Naive thymus-derived CD4-positive, alpha-beta T cell (primary cell): ENCODE measurements at regions of chr3 and their contacts with region 1.

Region 1: GRCh38 chr3:184298759-184299496 is at the start of gene PSMD2:
- DNase-seq: peak; percentile 93 to 97 (median 96)
- ATAC-seq: peak; percentile 98
- H3K4me3 ChIP-seq: peak within 1 kb of the TSS; percentile 74
- H3K4me3 Mint-ChIP-seq: peak within 1 kb of the TSS; percentile 89 to 97 (median 94)
- H3K27ac ChIP-seq: peak within 1 kb of the TSS; percentile 80
- H3K27ac Mint-ChIP-seq: peak within 1 kb of the TSS; percentile 85 to 97 (median 92)
- H3K4me1 ChIP-seq: peaks cover 12 to 15% of the 10 kb centered on the region in 2 donors
- H3K4me1 Mint-ChIP-seq: peaks cover 15 to 37% (median 25%) of the 10 kb centered on the region in 7 donors
- H3K27me3 ChIP-seq: no peaks in the 10 kb centered on the region
- H3K27me3 Mint-ChIP-seq: peaks cover 0 to 8% (median 0%) of the 10 kb centered on the region in 5 donors
- total RNA-seq, gene PSMD2: 139 to 204 (median 149) TPM

Region 2: GRCh38 chr3:183697610-183698317 is 601.2 kb before region 1 on chr3 and contains the start of gene YEATS2:
- CTCF ChIA-PET with region 1: no interaction called
- POLR2A ChIA-PET with region 1: no interaction called
- intact Hi-C with region 1: loop called in 1 of 2 experiments (anchors 1 kb)
- DNase-seq: peak; percentile 60 to 81 (median 74)
- ATAC-seq: peak; percentile 95
- H3K4me3 ChIP-seq: peak within 1 kb of the TSS; percentile 89
- H3K4me3 Mint-ChIP-seq: peak within 1 kb of the TSS; percentile 84 to 99 (median 94)
- H3K27ac ChIP-seq: peak within 1 kb of the TSS; percentile 84
- H3K27ac Mint-ChIP-seq: peak within 1 kb of the TSS; percentile 74 to 97 (median 90)
- H3K4me1 ChIP-seq: peaks cover 9 to 18% of the 10 kb centered on the region in 2 donors
- H3K4me1 Mint-ChIP-seq: peaks cover 32 to 50% (median 40%) of the 10 kb centered on the region in 7 donors
- H3K27me3 ChIP-seq: no peaks in the 10 kb centered on the region
- H3K27me3 Mint-ChIP-seq: no peaks in the 10 kb centered on the region
- total RNA-seq, gene YEATS2: 20.6 to 61.4 (median 21.9) TPM

Region 3: GRCh38 chr3:184017672-184018423 is 281.1 kb before region 1 on chr3 and contains the start of gene ABCC5:
- CTCF ChIA-PET with region 1: no interaction called
- POLR2A ChIA-PET with region 1: interaction called, 3 read pairs
- intact Hi-C with region 1: loop called (anchors 1 to 2 kb)
- DNase-seq: peak; percentile 62 to 84 (median 79)
- ATAC-seq: peak; percentile 96
- H3K4me3 ChIP-seq: peak within 1 kb of the TSS; percentile 100
- H3K4me3 Mint-ChIP-seq: peak within 1 kb of the TSS; percentile 96 to 100 (median 99)
- H3K27ac ChIP-seq: peak within 1 kb of the TSS; percentile 72
- H3K27ac Mint-ChIP-seq: peak within 1 kb of the TSS; percentile 70 to 95 (median 91)
- H3K4me1 ChIP-seq: peaks cover 8 to 14% of the 10 kb centered on the region in 2 donors
- H3K4me1 Mint-ChIP-seq: peaks cover 11 to 33% (median 25%) of the 10 kb centered on the region in 7 donors
- H3K27me3 ChIP-seq: no peaks in the 10 kb centered on the region
- H3K27me3 Mint-ChIP-seq: peaks cover 5 to 15% (median 9%) of the 10 kb centered on the region in 5 donors
- total RNA-seq, gene ABCC5: 15.6 to 50.4 (median 25.5) TPM

Region 4: GRCh38 chr3:184185461-184186308 is 113.2 kb before region 1 on chr3 and contains the start of gene ABCF3:
- CTCF ChIA-PET with region 1: no interaction called
- POLR2A ChIA-PET with region 1: interaction called, 4 read pairs
- intact Hi-C with region 1: loop called (anchors 1 kb)
- DNase-seq: peak; percentile 98 to 100 (median 99)
- ATAC-seq: peak; percentile 96
- H3K4me3 ChIP-seq: peak within 1 kb of the TSS; percentile 81
- H3K4me3 Mint-ChIP-seq: peak within 1 kb of the TSS; percentile 91 to 100 (median 98)
- H3K27ac ChIP-seq: peak within 1 kb of the TSS; percentile 89
- H3K27ac Mint-ChIP-seq: peak within 1 kb of the TSS; percentile 89 to 98 (median 97)
- H3K4me1 ChIP-seq: peaks cover 18 to 24% of the 10 kb centered on the region in 2 donors
- H3K4me1 Mint-ChIP-seq: peaks cover 31 to 52% (median 43%) of the 10 kb centered on the region in 7 donors
- H3K27me3 ChIP-seq: no peaks in the 10 kb centered on the region
- H3K27me3 Mint-ChIP-seq: no peaks in the 10 kb centered on the region
- total RNA-seq, gene ABCF3: 79.3 to 153 (median 117) TPM

Region 5: DNA sequence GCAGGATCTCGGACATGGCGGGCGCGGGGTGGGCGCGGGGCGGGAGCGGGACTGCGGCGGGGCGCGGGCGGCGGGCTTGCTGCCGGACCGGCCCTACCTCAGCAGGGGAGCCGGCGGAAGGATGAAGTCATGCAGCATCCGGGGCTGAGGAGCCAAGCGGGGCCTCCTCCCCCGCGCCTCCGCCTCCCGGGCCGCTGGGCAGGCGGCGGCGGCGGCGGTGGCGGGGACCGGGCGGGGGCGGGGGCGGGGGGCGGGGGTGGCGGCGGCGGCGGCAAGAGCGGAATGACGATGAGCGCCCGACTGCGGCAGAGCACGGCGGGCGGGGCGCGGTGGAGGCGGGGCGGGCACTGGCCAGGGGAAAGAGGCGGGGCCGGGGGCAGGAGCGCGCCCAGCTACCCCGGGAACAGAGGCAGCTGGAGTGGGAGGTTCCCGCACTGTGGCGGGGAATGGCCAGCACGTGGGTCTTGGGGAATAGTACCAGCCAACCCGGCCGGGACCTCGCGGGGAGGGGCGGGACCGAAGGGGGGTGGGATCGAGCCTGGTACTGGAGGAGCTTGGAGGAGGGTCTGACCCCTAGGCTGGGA is 37.6 kb before region 1 on chr3 and contains the start of gene CAMK2N2:
- CTCF ChIA-PET with region 1: no interaction called
- POLR2A ChIA-PET with region 1: no interaction called
- intact Hi-C with region 1: loop called (anchors 1 to 2 kb)
- DNase-seq: peak in 2 of 9 donors; percentile 26 to 72
- ATAC-seq: peak; percentile 62
- H3K4me3 ChIP-seq: peak within 1 kb of the TSS; percentile 35
- H3K4me3 Mint-ChIP-seq: peak within 1 kb of the TSS; percentile 80 to 98 (median 88)
- H3K27ac ChIP-seq: no peak within 1 kb of the TSS
- H3K27ac Mint-ChIP-seq: peak within 1 kb of the TSS in 6 of 9 donors; percentile 0 to 63 (median 6)
- H3K4me1 ChIP-seq: peaks cover 15 to 20% of the 10 kb centered on the region in 2 donors
- H3K4me1 Mint-ChIP-seq: peaks cover 18 to 27% (median 21%) of the 10 kb centered on the region in 7 donors
- H3K27me3 ChIP-seq: peaks cover 0 to 18% of the 10 kb centered on the region in 2 donors
- H3K27me3 Mint-ChIP-seq: peaks cover 37 to 57% (median 38%) of the 10 kb centered on the region in 5 donors
- total RNA-seq, gene CAMK2N2: not detected

Region 6: GRCh38 chr3:184275961-184276910 is 22.7 kb before region 1 on chr3 and contains the start of gene ECE2:
- CTCF ChIA-PET with region 1: no interaction called
- POLR2A ChIA-PET with region 1: no interaction called
- intact Hi-C with region 1: no loop called
- DNase-seq: no peak
- ATAC-seq: no peak
- H3K4me3 ChIP-seq: no peak within 1 kb of the TSS
- H3K4me3 Mint-ChIP-seq: peak within 1 kb of the TSS in 6 of 10 donors; percentile 2 to 69 (median 36)
- H3K27ac ChIP-seq: no peak within 1 kb of the TSS
- H3K27ac Mint-ChIP-seq: no peak within 1 kb of the TSS
- H3K4me1 ChIP-seq: no peaks in the 10 kb centered on the region
- H3K4me1 Mint-ChIP-seq: peaks cover 0 to 8% (median 3%) of the 10 kb centered on the region in 7 donors
- H3K27me3 ChIP-seq: peaks cover 0 to 3% of the 10 kb centered on the region in 2 donors
- H3K27me3 Mint-ChIP-seq: peaks cover 38 to 68% (median 46%) of the 10 kb centered on the region in 5 donors
- total RNA-seq, gene ECE2: not detected

Region 7: GRCh38 chr3:184335661-184336546 is 37.0 kb after region 1 on chr3:
- CTCF ChIA-PET with region 1: interaction called, 3 read pairs
- POLR2A ChIA-PET with region 1: interaction called, 3 read pairs
- intact Hi-C with region 1: loop called (anchors 1 kb)
- DNase-seq: peak; percentile 78 to 96 (median 87)
- ATAC-seq: peak; percentile 86
- H3K4me3 ChIP-seq: peak overlapping the region; percentile 66
- H3K4me3 Mint-ChIP-seq: peak overlapping the region; percentile 88 to 96 (median 92)
- H3K27ac ChIP-seq: peak overlapping the region; percentile 96
- H3K27ac Mint-ChIP-seq: peak overlapping the region; percentile 76 to 99 (median 96)
- H3K4me1 ChIP-seq: peaks cover 8 to 10% of the 10 kb centered on the region in 2 donors
- H3K4me1 Mint-ChIP-seq: peaks cover 18 to 54% (median 22%) of the 10 kb centered on the region in 7 donors
- H3K27me3 ChIP-seq: no peaks in the 10 kb centered on the region
- H3K27me3 Mint-ChIP-seq: no peaks in the 10 kb centered on the region

Region 8: DNA sequence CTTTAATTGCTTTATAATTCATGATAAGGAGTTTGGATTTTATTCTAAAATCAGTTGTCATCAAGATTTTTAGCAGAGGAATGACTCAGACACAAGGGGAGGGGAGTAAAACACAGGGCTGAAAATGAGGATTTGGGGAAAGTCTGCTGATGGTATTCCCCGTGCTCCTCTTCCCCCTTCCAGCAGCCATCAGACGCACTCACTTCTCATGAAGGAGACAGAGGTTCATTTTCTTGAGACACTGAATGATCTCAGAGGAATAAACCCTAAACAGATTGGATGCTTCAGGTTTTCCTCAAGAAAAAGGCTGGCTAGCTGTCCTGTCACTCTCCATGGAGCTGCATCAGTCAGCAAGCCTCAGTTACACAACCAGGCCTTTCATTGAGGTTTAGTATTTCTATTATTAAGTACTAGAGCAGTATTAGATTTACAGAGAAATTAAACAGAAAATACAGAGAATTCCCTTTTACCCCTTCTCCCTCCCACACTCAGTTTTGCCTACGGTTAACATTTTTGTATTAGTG is 687.5 kb after region 1 on chr3:
- CTCF ChIA-PET with region 1: no interaction called
- POLR2A ChIA-PET with region 1: no interaction called
- intact Hi-C with region 1: no loop called
- DNase-seq: no peak
- ATAC-seq: no peak
- H3K4me3 ChIP-seq: no peak overlapping the region
- H3K4me3 Mint-ChIP-seq: no peak overlapping the region
- H3K27ac ChIP-seq: no peak overlapping the region
- H3K27ac Mint-ChIP-seq: no peak overlapping the region
- H3K4me1 ChIP-seq: no peaks in the 10 kb centered on the region
- H3K4me1 Mint-ChIP-seq: no peaks in the 10 kb centered on the region
- H3K27me3 ChIP-seq: no peaks in the 10 kb centered on the region
- H3K27me3 Mint-ChIP-seq: no peaks in the 10 kb centered on the region

Region 9: GRCh38 chr3:185585859-185586685 is 1287.1 kb after region 1 on chr3 and contains the start of gene SENP2:
- CTCF ChIA-PET with region 1: no interaction called
- POLR2A ChIA-PET with region 1: interaction called, 3 read pairs
- intact Hi-C with region 1: loop called in 1 of 2 experiments (anchors 5 kb)
- DNase-seq: peak; percentile 96 to 100 (median 100)
- ATAC-seq: peak; percentile 94
- H3K4me3 ChIP-seq: peak within 1 kb of the TSS; percentile 95
- H3K4me3 Mint-ChIP-seq: peak within 1 kb of the TSS; percentile 79 to 94 (median 87)
- H3K27ac ChIP-seq: peak within 1 kb of the TSS; percentile 95
- H3K27ac Mint-ChIP-seq: peak within 1 kb of the TSS; percentile 86 to 99 (median 95)
- H3K4me1 ChIP-seq: peaks cover 21 to 27% of the 10 kb centered on the region in 2 donors
- H3K4me1 Mint-ChIP-seq: peaks cover 24 to 40% (median 31%) of the 10 kb centered on the region in 7 donors
- H3K27me3 ChIP-seq: no peaks in the 10 kb centered on the region
- H3K27me3 Mint-ChIP-seq: peaks cover 0 to 5% (median 0%) of the 10 kb centered on the region in 5 donors
- total RNA-seq, gene SENP2: 30.0 to 59.2 (median 47.3) TPM